ENCODE measurements at regions of chr4 and their contacts with region 1.

Region 1: GRCh38 chr4:170853422-170854021 is 763.8 kb upstream of the AADAT start:
- DNase-seq: peak; percentile 46 to 73
- ATAC-seq: peak; percentile 62
- H3K4me3 ChIP-seq: no peak overlapping the region
- H3K27ac ChIP-seq: no peak overlapping the region
- H3K4me1 ChIP-seq: no peaks in the 10 kb centered on the region
- H3K27me3 ChIP-seq: no peaks in the 10 kb centered on the region

Region 2: DNA sequence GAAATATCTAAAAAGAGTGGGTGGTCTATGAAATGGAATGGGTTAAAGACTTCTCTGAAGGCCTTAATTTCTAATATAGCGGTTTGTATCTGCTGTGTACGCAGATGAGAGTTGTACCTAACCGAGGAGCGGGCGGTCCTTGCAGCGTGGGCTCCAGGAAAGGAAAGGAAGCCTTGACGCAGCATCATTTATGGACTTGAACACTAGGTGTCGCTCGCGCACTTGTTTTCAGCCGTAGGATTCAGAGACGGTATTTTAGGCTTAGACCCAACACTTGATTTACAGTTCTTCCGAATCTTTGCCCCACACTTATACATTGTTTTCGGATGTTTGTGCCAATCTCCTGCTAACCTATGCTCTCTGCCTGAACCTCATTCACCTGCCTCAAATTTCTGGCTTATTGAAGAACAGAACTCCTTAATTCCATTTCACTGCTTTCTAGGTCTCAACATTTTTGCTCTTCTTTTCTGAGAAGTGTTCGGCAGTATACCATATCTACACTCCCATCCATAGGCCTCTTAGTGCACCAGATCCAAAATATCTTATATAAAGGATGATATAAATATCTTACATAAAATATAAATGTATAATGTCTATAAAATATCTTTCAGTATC is 714.8 kb before region 1 on chr4:
- intact Hi-C with region 1: loop called in 1 of 2 experiments (anchors 10 kb)
- DNase-seq: peak; percentile 67 to 87
- ATAC-seq: peak; percentile 66
- H3K4me3 ChIP-seq: peak overlapping the region in 1 of 2 donors; percentile 26
- H3K27ac ChIP-seq: no peak overlapping the region
- H3K4me1 ChIP-seq: no peaks in the 10 kb centered on the region
- H3K27me3 ChIP-seq: peaks cover 0 to 2% of the 10 kb centered on the region in 2 donors

Region 3: GRCh38 chr4:170259631-170260153 is 593.8 kb before region 1 on chr4:
- intact Hi-C with region 1: loop called in 1 of 2 experiments (anchors 5 kb)
- DNase-seq: peak in 1 of 2 donors; percentile 58
- ATAC-seq: peak; percentile 50
- H3K4me3 ChIP-seq: no peak overlapping the region
- H3K27ac ChIP-seq: no peak overlapping the region
- H3K4me1 ChIP-seq: no peaks in the 10 kb centered on the region
- H3K27me3 ChIP-seq: no peaks in the 10 kb centered on the region

Region 4: DNA sequence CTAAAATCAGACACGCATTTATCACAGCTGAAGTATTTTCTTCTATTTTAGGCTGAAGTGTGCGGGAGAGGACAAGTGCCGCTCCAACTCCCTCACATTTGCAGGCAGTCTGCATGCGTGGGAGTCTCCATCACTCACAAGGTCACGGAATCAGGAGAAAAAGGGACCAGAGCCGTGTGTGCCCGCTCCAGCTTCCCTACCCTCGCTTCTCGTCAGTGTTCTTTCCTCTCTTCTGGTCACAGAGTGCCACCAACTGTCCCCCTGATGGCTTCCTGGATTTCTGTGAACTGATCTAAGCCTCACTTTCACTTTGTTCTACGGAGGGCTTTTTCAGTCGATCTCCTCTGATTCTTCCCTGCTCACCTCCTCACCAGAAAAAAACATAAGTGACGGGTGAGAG is 356.4 kb before region 1 on chr4:
- intact Hi-C with region 1: no loop called
- DNase-seq: peak in 1 of 2 donors; percentile 57
- ATAC-seq: no peak
- H3K4me3 ChIP-seq: peak overlapping the region; percentile 1 to 8
- H3K27ac ChIP-seq: no peak overlapping the region
- H3K4me1 ChIP-seq: no peaks in the 10 kb centered on the region
- H3K27me3 ChIP-seq: no peaks in the 10 kb centered on the region

Region 5: DNA sequence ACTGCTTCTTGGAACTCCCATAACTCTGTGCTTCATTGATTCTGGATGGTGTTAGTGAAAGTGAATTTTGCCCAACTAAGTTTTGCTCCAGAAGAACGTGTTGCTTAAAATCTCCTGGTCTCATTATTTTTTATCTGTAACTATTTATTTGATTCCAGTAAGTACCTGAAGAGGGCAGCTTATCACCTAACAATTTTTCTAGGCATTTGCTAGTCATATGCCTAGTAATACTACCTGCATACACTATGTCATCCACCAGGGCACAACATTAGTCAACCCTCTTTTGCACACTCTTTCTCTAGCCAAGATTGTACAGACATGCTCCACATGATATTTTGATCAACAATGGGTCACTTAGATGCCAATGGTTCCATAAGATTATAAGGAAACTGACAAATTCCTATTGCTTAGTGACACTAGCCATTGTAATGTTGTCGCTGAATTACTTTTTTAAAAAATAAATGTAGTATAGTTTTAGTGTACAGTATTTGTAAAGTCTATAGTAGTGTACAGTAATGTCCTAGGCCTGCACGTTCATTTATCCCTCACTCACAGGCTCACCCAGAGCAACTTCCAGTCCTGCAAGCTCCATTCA is 263.8 kb before region 1 on chr4:
- intact Hi-C with region 1: loop called (anchors 5 kb)
- DNase-seq: no peak
- ATAC-seq: no peak
- H3K4me3 ChIP-seq: no peak overlapping the region
- H3K27ac ChIP-seq: no peak overlapping the region
- H3K4me1 ChIP-seq: no peaks in the 10 kb centered on the region
- H3K27me3 ChIP-seq: no peaks in the 10 kb centered on the region

Region 6: GRCh38 chr4:170887396-170887795 is 33.9 kb after region 1 on chr4:
- intact Hi-C with region 1: no loop called
- DNase-seq: no peak
- ATAC-seq: no peak
- H3K4me3 ChIP-seq: no peak overlapping the region
- H3K27ac ChIP-seq: no peak overlapping the region
- H3K4me1 ChIP-seq: no peaks in the 10 kb centered on the region
- H3K27me3 ChIP-seq: no peaks in the 10 kb centered on the region

Measured in aorta (tissue), 5 donors.